Sigmoid colon (tissue), 7 donors: ENCODE measurements at regions of chr10 and their contacts with region 1.

Region 1: GRCh38 chr10:67697724-67698131 is 1.7 kb upstream of the CTNNA3 start:
- DNase-seq: no peak
- H3K4me3 ChIP-seq: no peak overlapping the region
- H3K27ac ChIP-seq: no peak overlapping the region
- H3K4me1 ChIP-seq: peaks cover 0 to 32% (median 18%) of the 10 kb centered on the region in 4 donors
- H3K27me3 ChIP-seq: no peaks in the 10 kb centered on the region
- CTCF ChIP-seq: peak in 3 of 4 experiments; percentile 41 to 67 (median 47)
- EP300 ChIP-seq: no peak
- POLR2A ChIP-seq: no peak

Region 2: DNA sequence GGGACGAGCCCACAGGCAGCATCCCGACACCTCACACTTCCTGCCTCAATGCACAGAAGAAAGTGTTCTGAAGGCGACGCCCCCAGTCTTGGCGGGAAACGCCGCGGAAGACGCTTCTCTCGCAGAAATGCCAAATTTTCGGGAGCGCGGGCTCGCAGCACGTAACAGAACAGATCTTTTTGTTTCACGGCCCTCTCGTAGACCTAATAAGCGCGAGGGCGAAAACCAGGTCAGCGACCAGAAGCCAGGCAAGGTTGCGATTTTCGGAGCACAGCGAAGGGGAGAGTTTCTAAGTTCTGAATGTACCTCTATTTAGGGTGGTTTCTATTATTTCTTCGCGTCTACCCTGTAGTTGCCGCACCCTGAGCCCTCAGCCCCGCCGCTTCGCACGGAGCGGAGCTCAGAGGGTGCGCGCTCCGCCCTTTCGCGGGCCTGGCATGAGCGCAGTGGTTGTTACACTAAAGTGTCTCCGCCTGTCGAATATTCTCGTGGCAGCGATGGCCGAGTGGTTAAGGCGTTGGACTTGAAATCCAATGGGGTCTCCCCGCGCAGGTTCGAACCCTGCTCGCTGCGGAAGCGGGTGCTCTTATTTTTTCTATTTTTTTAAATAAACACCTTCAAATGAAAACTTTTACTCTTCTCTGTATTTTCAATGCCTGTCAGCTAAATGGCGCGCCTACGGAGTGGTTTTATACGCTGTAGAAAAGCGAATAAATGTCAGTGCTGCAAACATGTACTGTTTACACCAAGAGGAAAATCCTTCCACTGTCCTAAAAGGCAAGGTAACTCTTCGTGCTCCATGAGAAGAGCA is 66.5 kb after region 1 on chr10:
- intact Hi-C with region 1: loop called (anchors 10 kb)
- DNase-seq: peak; percentile 97
- H3K4me3 ChIP-seq: peak overlapping the region; percentile 59 to 72 (median 66)
- H3K27ac ChIP-seq: peak overlapping the region; percentile 91 to 96 (median 94)
- H3K4me1 ChIP-seq: peaks cover 0 to 4% (median 0%) of the 10 kb centered on the region in 4 donors
- H3K27me3 ChIP-seq: no peaks in the 10 kb centered on the region
- CTCF ChIP-seq: no peak
- EP300 ChIP-seq: peak in 1 of 4 donors; percentile 1
- POLR2A ChIP-seq: no peak

Region 3: DNA sequence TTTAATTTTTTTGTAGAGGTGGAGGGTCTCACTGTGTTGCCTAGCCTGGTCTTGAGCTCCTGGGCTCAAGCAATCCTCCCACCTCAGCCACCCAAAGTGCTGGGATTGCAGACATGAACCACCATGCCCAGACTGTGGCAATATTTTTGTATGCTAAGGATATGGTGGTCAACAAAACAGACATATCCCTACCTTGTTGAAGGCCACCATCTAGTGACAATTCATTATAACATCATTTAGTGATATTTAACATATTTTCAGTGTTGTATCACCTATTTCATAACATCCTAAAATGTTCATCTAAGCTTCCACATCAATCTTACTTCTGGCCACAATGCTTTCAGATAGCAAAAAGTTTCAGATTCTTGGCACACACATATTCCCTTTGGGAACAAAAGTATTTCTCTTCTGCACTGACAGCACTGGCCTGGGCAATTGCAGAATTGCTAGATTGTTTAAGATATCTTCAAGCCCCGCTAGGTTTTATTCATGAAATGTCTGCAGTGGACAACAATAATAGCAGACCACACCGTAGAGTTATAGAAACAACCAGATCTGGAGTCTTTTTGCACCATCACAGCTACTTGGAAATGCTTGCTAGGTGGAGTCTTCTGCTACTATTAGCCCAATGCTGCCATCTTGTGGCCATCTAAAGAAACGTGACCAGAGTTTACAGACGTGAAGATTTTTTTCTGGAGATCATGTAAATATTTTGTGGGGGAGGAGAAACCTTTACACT is 81.9 kb after region 1 on chr10:
- intact Hi-C with region 1: loop called (anchors 2 kb)
- DNase-seq: peak; percentile 77
- H3K4me3 ChIP-seq: peak overlapping the region in 1 of 4 donors; percentile 14
- H3K27ac ChIP-seq: peak overlapping the region in 1 of 4 donors; percentile 2
- H3K4me1 ChIP-seq: peaks cover 0 to 11% (median 4%) of the 10 kb centered on the region in 4 donors
- H3K27me3 ChIP-seq: no peaks in the 10 kb centered on the region
- CTCF ChIP-seq: peak; percentile 74 to 83 (median 79)
- EP300 ChIP-seq: no peak
- POLR2A ChIP-seq: no peak